Naive thymus-derived CD4-positive, alpha-beta T cell (primary cell): ENCODE measurements at regions of chr1 and their contacts with region 1.

Region 1: GRCh38 chr1:8962812-8963530 is 17.3 kb downstream of the CA6 start:
- DNase-seq: peak in 2 of 9 donors; percentile 32 to 38
- ATAC-seq: peak; percentile 74
- H3K4me3 ChIP-seq: no peak overlapping the region
- H3K4me3 Mint-ChIP-seq: peak overlapping the region; percentile 50 to 100 (median 74)
- H3K27ac ChIP-seq: peak overlapping the region; percentile 58
- H3K27ac Mint-ChIP-seq: peak overlapping the region; percentile 49 to 97 (median 89)
- H3K4me1 ChIP-seq: peaks cover 5 to 55% of the 10 kb centered on the region in 2 donors
- H3K4me1 Mint-ChIP-seq: peaks cover 42 to 86% (median 80%) of the 10 kb centered on the region in 7 donors
- H3K27me3 ChIP-seq: no peaks in the 10 kb centered on the region
- H3K27me3 Mint-ChIP-seq: no peaks in the 10 kb centered on the region

Region 2: GRCh38 chr1:8941906-8942305 is 21.1 kb before region 1 on chr1:
- CTCF ChIA-PET with region 1: interaction called, 14 read pairs
- POLR2A ChIA-PET with region 1: interaction called, 20 read pairs
- intact Hi-C with region 1: loop called in 1 of 2 experiments (anchors 1 kb)
- DNase-seq: no peak
- ATAC-seq: no peak
- H3K4me3 ChIP-seq: no peak overlapping the region
- H3K4me3 Mint-ChIP-seq: peak overlapping the region in 1 of 10 donors; percentile 44
- H3K27ac ChIP-seq: no peak overlapping the region
- H3K27ac Mint-ChIP-seq: peak overlapping the region in 4 of 9 donors; percentile 38 to 86 (median 63)
- H3K4me1 ChIP-seq: peaks cover 19 to 80% of the 10 kb centered on the region in 2 donors
- H3K4me1 Mint-ChIP-seq: peaks cover 65 to 90% (median 81%) of the 10 kb centered on the region in 7 donors
- H3K27me3 ChIP-seq: no peaks in the 10 kb centered on the region
- H3K27me3 Mint-ChIP-seq: no peaks in the 10 kb centered on the region

Region 3: GRCh38 chr1:8947127-8947691 is 15.8 kb before region 1 on chr1:
- CTCF ChIA-PET with region 1: interaction called, 14 read pairs
- POLR2A ChIA-PET with region 1: interaction called, 20 read pairs
- intact Hi-C with region 1: loop called in 1 of 2 experiments (anchors 1 kb)
- DNase-seq: peak in 2 of 9 donors; percentile 19 to 36
- ATAC-seq: no peak
- H3K4me3 ChIP-seq: no peak overlapping the region
- H3K4me3 Mint-ChIP-seq: peak overlapping the region; percentile 21 to 80 (median 61)
- H3K27ac ChIP-seq: peak overlapping the region; percentile 57
- H3K27ac Mint-ChIP-seq: peak overlapping the region; percentile 68 to 98 (median 90)
- H3K4me1 ChIP-seq: peaks cover 16 to 68% of the 10 kb centered on the region in 2 donors
- H3K4me1 Mint-ChIP-seq: peaks cover 42 to 82% (median 61%) of the 10 kb centered on the region in 7 donors
- H3K27me3 ChIP-seq: no peaks in the 10 kb centered on the region
- H3K27me3 Mint-ChIP-seq: no peaks in the 10 kb centered on the region

Region 4: GRCh38 chr1:8987881-8988617 is 25.1 kb after region 1 on chr1:
- CTCF ChIA-PET with region 1: interaction called, 45 read pairs
- POLR2A ChIA-PET with region 1: interaction called, 100 read pairs
- intact Hi-C with region 1: loop called (anchors 1 to 2 kb)
- DNase-seq: peak; percentile 19 to 78 (median 65)
- ATAC-seq: peak; percentile 89
- H3K4me3 ChIP-seq: no peak overlapping the region
- H3K4me3 Mint-ChIP-seq: peak overlapping the region; percentile 36 to 85 (median 73)
- H3K27ac ChIP-seq: peak overlapping the region; percentile 65
- H3K27ac Mint-ChIP-seq: peak overlapping the region; percentile 57 to 99 (median 93)
- H3K4me1 ChIP-seq: peaks cover 4 to 22% of the 10 kb centered on the region in 2 donors
- H3K4me1 Mint-ChIP-seq: peaks cover 9 to 63% (median 41%) of the 10 kb centered on the region in 7 donors
- H3K27me3 ChIP-seq: no peaks in the 10 kb centered on the region
- H3K27me3 Mint-ChIP-seq: no peaks in the 10 kb centered on the region

Region 5: GRCh38 chr1:9078015-9078750 is 115.2 kb after region 1 on chr1:
- CTCF ChIA-PET with region 1: no interaction called
- POLR2A ChIA-PET with region 1: no interaction called
- intact Hi-C with region 1: no loop called
- DNase-seq: no peak
- ATAC-seq: peak; percentile 38
- H3K4me3 ChIP-seq: no peak overlapping the region
- H3K4me3 Mint-ChIP-seq: peak overlapping the region in 1 of 10 donors; percentile 48
- H3K27ac ChIP-seq: no peak overlapping the region
- H3K27ac Mint-ChIP-seq: peak overlapping the region in 1 of 9 donors; percentile 50
- H3K4me1 ChIP-seq: no peaks in the 10 kb centered on the region
- H3K4me1 Mint-ChIP-seq: peaks cover 18 to 72% (median 41%) of the 10 kb centered on the region in 7 donors
- H3K27me3 ChIP-seq: no peaks in the 10 kb centered on the region
- H3K27me3 Mint-ChIP-seq: peaks cover 6 to 22% (median 17%) of the 10 kb centered on the region in 5 donors